Caco-2 (cell line): ENCODE measurements at regions of chr4 and their contacts with region 1.

Region 1: DNA sequence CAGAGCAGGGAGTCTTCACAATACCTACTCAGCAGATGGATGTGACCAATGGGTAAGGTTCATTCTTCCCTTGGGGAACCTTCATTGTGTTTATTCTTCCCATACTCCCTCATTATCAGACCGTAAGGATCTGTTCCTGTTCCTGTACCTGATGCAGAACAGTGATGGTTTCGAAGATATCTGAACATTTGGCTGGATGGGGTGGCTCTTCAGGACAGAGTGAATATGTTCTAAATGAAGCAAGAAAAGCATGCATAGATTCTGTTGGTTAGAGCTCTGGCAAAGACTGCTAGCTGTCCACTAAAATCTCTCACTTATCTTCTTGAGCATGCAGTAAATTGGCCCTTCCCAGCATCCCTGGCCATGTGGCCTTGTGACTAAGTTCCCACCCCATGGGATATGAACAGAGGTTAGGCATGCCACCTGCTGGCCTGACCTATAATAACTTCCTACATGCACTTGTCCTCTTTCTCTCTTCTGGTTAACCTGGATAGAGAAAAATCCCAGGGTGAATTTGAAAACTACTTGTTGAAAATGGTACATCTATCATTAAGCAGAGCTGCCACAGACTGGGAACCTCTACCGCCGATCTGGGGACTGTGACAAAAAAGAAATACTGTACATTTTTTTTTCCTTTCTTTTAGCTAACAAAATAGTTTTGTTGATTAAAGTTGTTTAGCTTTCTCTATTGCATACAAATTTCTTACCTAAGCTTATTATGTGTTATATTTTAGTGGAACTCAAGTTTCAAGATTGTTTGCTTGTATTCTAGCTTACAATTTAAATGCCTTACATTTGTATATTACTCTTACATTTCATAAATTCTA is 60.0 kb upstream of the BANK1 start:
- DNase-seq: peak; percentile 72 to 75
- H3K4me3 ChIP-seq: no peak overlapping the region
- H3K4me3 Mint-ChIP-seq: no peak overlapping the region
- H3K27ac Mint-ChIP-seq: no peak overlapping the region
- H3K4me1 ChIP-seq: no peaks in the 10 kb centered on the region
- H3K4me1 Mint-ChIP-seq: no peaks in the 10 kb centered on the region
- H3K27me3 ChIP-seq: no peaks in the 10 kb centered on the region
- H3K27me3 Mint-ChIP-seq: no peaks in the 10 kb centered on the region
- CTCF ChIP-seq: peak; percentile 60 to 62

Region 2: DNA sequence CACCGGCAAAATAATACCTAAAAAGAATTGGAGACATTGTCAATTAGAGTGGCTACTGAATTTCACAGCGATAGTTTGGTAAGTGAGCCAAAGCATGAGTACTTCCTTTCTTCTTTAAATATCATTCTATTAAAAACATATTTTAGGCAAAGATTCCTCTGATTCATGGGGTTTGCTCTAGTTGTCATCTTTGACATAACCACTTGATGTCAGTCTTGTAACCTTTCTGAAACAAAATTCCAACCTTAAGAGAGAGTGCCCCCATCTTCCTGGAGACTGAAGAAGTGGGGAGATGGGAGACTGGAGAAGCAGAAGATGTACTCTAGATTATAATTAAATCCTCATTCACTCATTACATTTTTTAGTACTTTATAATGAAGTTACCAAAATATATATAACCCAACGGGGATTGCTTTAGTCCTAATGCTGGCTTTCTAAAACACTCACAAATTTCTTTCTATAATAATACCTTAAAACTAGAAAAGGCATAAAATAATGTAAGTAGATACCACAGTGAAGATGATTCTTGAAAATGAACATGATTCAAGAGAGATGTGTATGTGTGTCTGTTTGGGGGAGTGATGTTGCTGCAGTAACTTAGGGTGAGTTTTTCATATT is 1309.0 kb before region 1 on chr4:
- CTCF ChIA-PET with region 1: no interaction called
- POLR2A ChIA-PET with region 1: no interaction called
- intact Hi-C with region 1: loop called (anchors 2 kb)
- DNase-seq: no peak
- H3K4me3 ChIP-seq: no peak overlapping the region
- H3K4me3 Mint-ChIP-seq: no peak overlapping the region
- H3K27ac Mint-ChIP-seq: no peak overlapping the region
- H3K4me1 ChIP-seq: no peaks in the 10 kb centered on the region
- H3K4me1 Mint-ChIP-seq: no peaks in the 10 kb centered on the region
- H3K27me3 ChIP-seq: no peaks in the 10 kb centered on the region
- H3K27me3 Mint-ChIP-seq: peaks cover 2% of the 10 kb centered on the region
- CTCF ChIP-seq: peak; percentile 29 to 49

Region 3: DNA sequence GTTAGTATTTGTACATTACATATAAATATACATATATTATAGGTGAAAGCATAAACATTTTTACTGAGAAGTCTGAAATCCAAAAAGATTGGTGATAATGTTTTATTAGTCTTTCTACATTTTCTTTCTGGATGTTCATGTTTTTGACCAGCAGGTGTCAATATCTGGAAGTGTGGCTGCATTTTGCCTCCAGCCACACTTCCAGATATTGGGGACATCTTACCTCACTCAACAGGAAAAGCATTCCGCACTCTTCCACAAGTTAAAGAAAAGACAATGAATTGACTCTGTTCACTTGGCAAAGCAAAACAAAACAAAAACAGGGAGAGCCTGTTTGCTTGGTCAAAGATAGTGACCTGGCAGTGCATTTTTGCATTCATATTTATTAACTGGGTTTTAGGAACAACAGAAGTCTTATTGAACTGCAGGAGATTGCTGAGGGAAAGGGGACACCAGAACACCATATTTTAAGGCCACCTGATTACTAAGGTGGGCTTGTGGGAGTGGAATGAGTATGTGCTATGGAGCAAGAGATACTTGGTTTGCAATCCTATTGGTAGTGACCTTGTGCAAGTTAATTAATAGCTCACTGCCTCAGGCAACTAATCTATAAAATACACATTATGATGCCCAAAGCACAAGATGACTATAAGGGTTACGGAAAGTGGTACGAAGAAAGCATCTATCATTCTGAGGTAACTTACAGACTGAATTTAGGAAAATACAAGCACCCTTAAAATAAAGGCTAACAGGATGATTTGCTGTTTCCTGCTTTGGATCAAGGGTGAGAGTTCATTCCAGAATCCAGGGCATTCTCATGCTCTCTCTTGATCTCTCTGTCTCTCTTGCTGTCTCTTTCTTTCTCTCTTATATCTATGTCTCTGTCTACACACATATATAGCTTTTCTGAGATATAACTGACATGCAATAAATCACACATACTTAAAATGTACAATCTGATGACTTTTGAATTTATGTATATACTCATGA is 822.7 kb before region 1 on chr4:
- CTCF ChIA-PET with region 1: no interaction called
- POLR2A ChIA-PET with region 1: no interaction called
- intact Hi-C with region 1: loop called (anchors 5 kb)
- DNase-seq: peak in 1 of 2 experiments; percentile 2
- H3K4me3 ChIP-seq: no peak overlapping the region
- H3K4me3 Mint-ChIP-seq: no peak overlapping the region
- H3K27ac Mint-ChIP-seq: no peak overlapping the region
- H3K4me1 ChIP-seq: no peaks in the 10 kb centered on the region
- H3K4me1 Mint-ChIP-seq: peaks cover 6% of the 10 kb centered on the region
- H3K27me3 ChIP-seq: no peaks in the 10 kb centered on the region
- H3K27me3 Mint-ChIP-seq: peaks cover 7% of the 10 kb centered on the region
- CTCF ChIP-seq: peak in 1 of 2 experiments; percentile 36

Region 4: GRCh38 chr4:101169044-101170014 is 561.2 kb before region 1 on chr4:
- CTCF ChIA-PET with region 1: no interaction called
- POLR2A ChIA-PET with region 1: no interaction called
- intact Hi-C with region 1: loop called (anchors 1 kb)
- DNase-seq: peak; percentile 75 to 76
- H3K4me3 ChIP-seq: no peak overlapping the region
- H3K4me3 Mint-ChIP-seq: no peak overlapping the region
- H3K27ac Mint-ChIP-seq: no peak overlapping the region
- H3K4me1 ChIP-seq: peaks cover 10% of the 10 kb centered on the region; the same call in 1 of the 2 replicates
- H3K4me1 Mint-ChIP-seq: peaks cover 6% of the 10 kb centered on the region
- H3K27me3 ChIP-seq: no peaks in the 10 kb centered on the region
- H3K27me3 Mint-ChIP-seq: no peaks in the 10 kb centered on the region
- CTCF ChIP-seq: peak; percentile 71 to 72

Region 5: DNA sequence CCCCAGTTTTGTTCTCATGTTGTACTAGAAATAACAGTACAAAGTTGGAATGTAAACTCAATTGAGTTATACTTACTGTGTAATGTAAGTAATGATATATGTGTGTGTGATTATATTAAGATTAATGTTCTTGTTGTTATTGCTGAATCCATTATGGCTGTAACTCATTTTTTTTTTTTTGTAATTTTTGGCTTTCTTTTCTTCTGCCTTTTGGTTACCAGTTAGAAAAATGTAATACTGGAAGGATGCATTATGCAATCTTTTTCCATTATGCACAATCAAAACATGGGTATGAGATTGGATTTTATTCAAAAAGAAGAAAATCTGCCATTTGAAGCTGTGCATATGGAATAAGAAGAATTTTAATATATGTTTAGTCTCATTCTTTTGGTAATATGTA is 94.0 kb after region 1 on chr4:
- CTCF ChIA-PET with region 1: no interaction called
- POLR2A ChIA-PET with region 1: no interaction called
- intact Hi-C with region 1: no loop called
- DNase-seq: no peak
- H3K4me3 ChIP-seq: no peak overlapping the region
- H3K4me3 Mint-ChIP-seq: no peak overlapping the region
- H3K27ac Mint-ChIP-seq: no peak overlapping the region
- H3K4me1 ChIP-seq: no peaks in the 10 kb centered on the region
- H3K4me1 Mint-ChIP-seq: no peaks in the 10 kb centered on the region
- H3K27me3 ChIP-seq: no peaks in the 10 kb centered on the region
- H3K27me3 Mint-ChIP-seq: no peaks in the 10 kb centered on the region
- CTCF ChIP-seq: no peak